Naive thymus-derived CD4-positive, alpha-beta T cell (primary cell): ENCODE measurements at regions of chr7 and their contacts with region 1.

Region 1: GRCh38 chr7:99438573-99439480 is at the starts of genes CPSF4 and PTCD1:
- DNase-seq: peak; percentile 71 to 92 (median 77)
- ATAC-seq: peak; percentile 95
- H3K4me3 ChIP-seq: peak within 1 kb of the TSS; percentile 93
- H3K4me3 Mint-ChIP-seq: peak within 1 kb of the TSS; percentile 92 to 100 (median 98)
- H3K27ac ChIP-seq: peak within 1 kb of the TSS; percentile 81
- H3K27ac Mint-ChIP-seq: peak within 1 kb of the TSS; percentile 85 to 95 (median 94)
- H3K4me1 ChIP-seq: peaks cover 10 to 11% of the 10 kb centered on the region in 2 donors
- H3K4me1 Mint-ChIP-seq: peaks cover 18 to 40% (median 31%) of the 10 kb centered on the region in 7 donors
- H3K27me3 ChIP-seq: no peaks in the 10 kb centered on the region
- H3K27me3 Mint-ChIP-seq: no peaks in the 10 kb centered on the region
- total RNA-seq, gene CPSF4: 36.3 to 69.4 (median 45.7) TPM
- total RNA-seq, gene PTCD1: 4.0 to 10.8 (median 8.8) TPM

Region 2: GRCh38 chr7:97565665-97566064 is 1873.2 kb before region 1 on chr7:
- CTCF ChIA-PET with region 1: no interaction called
- POLR2A ChIA-PET with region 1: no interaction called
- intact Hi-C with region 1: no loop called
- DNase-seq: no peak
- ATAC-seq: no peak
- H3K4me3 ChIP-seq: no peak overlapping the region
- H3K4me3 Mint-ChIP-seq: no peak overlapping the region
- H3K27ac ChIP-seq: no peak overlapping the region
- H3K27ac Mint-ChIP-seq: no peak overlapping the region
- H3K4me1 ChIP-seq: no peaks in the 10 kb centered on the region
- H3K4me1 Mint-ChIP-seq: no peaks in the 10 kb centered on the region
- H3K27me3 ChIP-seq: no peaks in the 10 kb centered on the region
- H3K27me3 Mint-ChIP-seq: no peaks in the 10 kb centered on the region

Region 3: DNA sequence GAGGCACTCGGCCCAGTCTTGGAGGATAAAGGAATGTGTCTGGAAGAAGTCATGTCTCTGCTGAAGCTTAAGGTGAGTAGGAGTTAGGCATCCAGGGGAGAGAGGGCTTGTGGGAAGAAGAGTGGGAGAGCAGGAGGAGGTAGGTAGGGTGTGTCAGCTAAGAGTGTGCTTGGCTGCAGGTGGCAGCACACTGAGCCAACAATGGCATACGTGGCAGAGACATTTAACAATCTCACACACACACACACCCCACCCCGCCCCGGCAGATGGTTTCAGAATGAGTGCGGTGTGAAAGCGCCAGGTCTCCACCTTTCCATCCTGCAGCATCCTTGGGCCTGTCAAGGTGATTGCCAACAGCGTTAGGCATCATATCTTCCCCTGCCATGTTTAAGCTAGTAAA is 124.3 kb before region 1 on chr7:
- CTCF ChIA-PET with region 1: no interaction called
- POLR2A ChIA-PET with region 1: no interaction called
- intact Hi-C with region 1: no loop called
- DNase-seq: no peak
- ATAC-seq: no peak
- H3K4me3 ChIP-seq: no peak overlapping the region
- H3K4me3 Mint-ChIP-seq: no peak overlapping the region
- H3K27ac ChIP-seq: no peak overlapping the region
- H3K27ac Mint-ChIP-seq: no peak overlapping the region
- H3K4me1 ChIP-seq: peaks cover 0 to 3% of the 10 kb centered on the region in 2 donors
- H3K4me1 Mint-ChIP-seq: peaks cover 4 to 20% (median 5%) of the 10 kb centered on the region in 7 donors
- H3K27me3 ChIP-seq: no peaks in the 10 kb centered on the region
- H3K27me3 Mint-ChIP-seq: peaks cover 0 to 3% (median 0%) of the 10 kb centered on the region in 5 donors

Region 4: DNA sequence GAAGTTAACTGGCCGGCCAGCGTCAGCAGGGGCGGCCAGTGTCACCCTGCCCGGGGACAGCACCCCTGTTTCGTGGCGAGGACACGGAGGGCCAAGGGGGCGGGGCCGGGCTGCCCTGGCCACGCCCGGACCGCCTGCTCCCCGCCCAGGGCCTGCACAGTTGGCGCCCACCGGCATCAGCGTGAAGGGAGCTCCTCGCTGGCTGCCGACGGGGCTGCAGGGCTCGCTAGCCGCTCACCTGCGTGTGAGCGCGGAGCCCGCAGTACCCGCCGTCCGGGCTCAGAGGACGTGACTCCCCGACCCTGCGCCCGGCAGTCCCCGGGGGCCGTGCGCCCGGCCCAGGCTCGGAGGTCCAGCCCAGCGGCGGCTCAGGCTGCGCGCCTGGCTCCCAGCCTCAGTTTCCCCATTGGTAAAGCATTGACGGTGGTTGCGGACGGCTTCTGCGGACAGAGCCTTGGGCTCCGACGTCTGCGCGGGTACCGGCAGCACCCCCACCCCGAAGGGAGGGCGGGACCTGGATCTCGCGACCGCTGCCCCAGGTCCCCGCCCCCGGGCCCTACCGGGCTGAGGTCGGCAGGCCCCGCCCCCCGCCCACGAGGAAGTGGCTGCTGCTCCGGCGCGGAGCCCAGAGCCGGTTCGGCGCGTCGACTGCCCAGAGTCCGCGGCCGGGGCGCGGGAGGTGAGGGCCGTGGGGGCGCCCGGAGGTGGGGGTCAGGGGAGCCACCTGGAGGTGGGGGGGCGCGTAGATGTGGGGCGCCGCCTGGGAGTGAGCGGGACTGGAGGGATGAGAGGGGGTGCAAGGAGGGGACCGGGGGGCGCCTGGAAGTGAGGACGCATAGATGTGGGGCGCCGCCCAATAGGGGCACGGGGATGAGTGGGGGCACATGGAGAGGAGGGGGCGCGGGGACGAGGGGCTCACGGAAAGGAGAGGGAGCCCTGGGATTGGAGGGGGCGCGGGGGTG is 64.4 kb before region 1 on chr7 and contains the start of gene ARPC1B:
- CTCF ChIA-PET with region 1: no interaction called
- POLR2A ChIA-PET with region 1: no interaction called
- intact Hi-C with region 1: loop called (anchors 1 to 2 kb)
- DNase-seq: peak; percentile 67 to 86 (median 76)
- ATAC-seq: peak; percentile 82
- H3K4me3 ChIP-seq: peak within 1 kb of the TSS; percentile 83
- H3K4me3 Mint-ChIP-seq: peak within 1 kb of the TSS; percentile 71 to 90 (median 82)
- H3K27ac ChIP-seq: peak within 1 kb of the TSS; percentile 95
- H3K27ac Mint-ChIP-seq: peak within 1 kb of the TSS; percentile 76 to 99 (median 94)
- H3K4me1 ChIP-seq: peaks cover 18 to 35% of the 10 kb centered on the region in 2 donors
- H3K4me1 Mint-ChIP-seq: peaks cover 6 to 36% (median 32%) of the 10 kb centered on the region in 7 donors
- H3K27me3 ChIP-seq: no peaks in the 10 kb centered on the region
- H3K27me3 Mint-ChIP-seq: no peaks in the 10 kb centered on the region
- total RNA-seq, gene ARPC1B: 88.1 to 364 (median 141) TPM

Region 5: DNA sequence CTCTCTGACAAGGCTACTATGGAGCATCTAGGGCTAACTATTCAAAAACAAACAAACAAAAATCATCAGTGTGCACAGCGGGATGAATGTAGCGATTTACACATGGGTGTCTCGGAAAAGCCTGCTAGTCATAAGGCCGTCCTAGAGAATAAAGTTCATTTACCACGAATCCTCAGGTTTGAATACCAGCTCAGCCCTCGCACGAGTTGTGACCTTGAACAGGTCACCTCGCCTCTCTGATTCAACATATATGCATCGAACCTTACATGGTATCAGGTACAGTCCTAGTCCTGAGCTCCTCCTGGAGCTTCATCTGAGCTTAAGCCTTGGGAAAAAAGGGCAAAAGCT is 26.6 kb after region 1 on chr7:
- CTCF ChIA-PET with region 1: no interaction called
- POLR2A ChIA-PET with region 1: interaction called, 4 read pairs
- intact Hi-C with region 1: loop called (anchors 1 kb)
- DNase-seq: no peak
- ATAC-seq: peak; percentile 2
- H3K4me3 ChIP-seq: peak overlapping the region; percentile 97
- H3K4me3 Mint-ChIP-seq: peak overlapping the region; percentile 82 to 98 (median 96)
- H3K27ac ChIP-seq: peak overlapping the region; percentile 90
- H3K27ac Mint-ChIP-seq: peak overlapping the region; percentile 90 to 98 (median 96)
- H3K4me1 ChIP-seq: peaks cover 10 to 11% of the 10 kb centered on the region in 2 donors
- H3K4me1 Mint-ChIP-seq: peaks cover 19 to 52% (median 31%) of the 10 kb centered on the region in 7 donors
- H3K27me3 ChIP-seq: no peaks in the 10 kb centered on the region
- H3K27me3 Mint-ChIP-seq: peaks cover 0 to 2% (median 0%) of the 10 kb centered on the region in 5 donors

Region 6: GRCh38 chr7:99837649-99838361 is 399.0 kb after region 1 on chr7:
- CTCF ChIA-PET with region 1: no interaction called
- POLR2A ChIA-PET with region 1: no interaction called
- intact Hi-C with region 1: loop called in 1 of 2 experiments (anchors 1 kb)
- DNase-seq: peak in 3 of 9 donors; percentile 2 to 12 (median 7)
- ATAC-seq: peak; percentile 45
- H3K4me3 ChIP-seq: no peak overlapping the region
- H3K4me3 Mint-ChIP-seq: peak overlapping the region in 2 of 10 donors; percentile 27 to 38
- H3K27ac ChIP-seq: no peak overlapping the region
- H3K27ac Mint-ChIP-seq: peak overlapping the region in 7 of 9 donors; percentile 1 to 73 (median 47)
- H3K4me1 ChIP-seq: no peaks in the 10 kb centered on the region
- H3K4me1 Mint-ChIP-seq: peaks cover 0 to 10% (median 6%) of the 10 kb centered on the region in 7 donors
- H3K27me3 ChIP-seq: no peaks in the 10 kb centered on the region
- H3K27me3 Mint-ChIP-seq: peaks cover 0 to 4% (median 2%) of the 10 kb centered on the region in 5 donors